PC-9 (cell line): ENCODE measurements at regions of chr7 and their contacts with region 1.

Region 1: GRCh38 chr7:11026452-11027359 is 53.0 kb downstream of the PHF14 start:
- DNase-seq: no peak
- H3K4me3 ChIP-seq: no peak overlapping the region
- H3K27ac ChIP-seq: no peak overlapping the region
- H3K4me1 ChIP-seq: no peaks in the 10 kb centered on the region
- H3K27me3 ChIP-seq: no peaks in the 10 kb centered on the region
- CTCF ChIP-seq: no peak

Region 2: DNA sequence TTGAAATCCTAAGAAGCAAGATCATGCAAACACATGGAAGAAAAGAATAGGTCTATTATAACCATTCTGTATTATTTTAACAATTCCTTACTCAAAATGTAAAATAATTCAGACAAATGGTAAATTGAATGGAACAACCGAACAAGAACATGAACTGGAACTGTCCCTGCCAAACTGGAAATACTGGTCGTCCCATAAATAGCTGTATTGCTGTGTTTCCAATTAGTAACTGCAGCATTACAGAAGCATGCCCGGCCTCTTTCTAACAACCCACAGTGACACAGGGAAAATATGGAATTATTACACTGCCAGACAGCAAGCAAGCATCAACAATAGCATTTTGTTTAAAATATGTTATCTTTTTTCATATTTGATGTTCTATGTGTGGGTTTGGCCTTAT is 1191.5 kb before region 1 on chr7:
- CTCF ChIA-PET with region 1: interaction called, 11 read pairs
- POLR2A ChIA-PET with region 1: no interaction called
- intact Hi-C with region 1: no loop called
- DNase-seq: peak in 1 of 2 experiments; percentile 46
- H3K4me3 ChIP-seq: no peak overlapping the region
- H3K27ac ChIP-seq: no peak overlapping the region
- H3K4me1 ChIP-seq: no peaks in the 10 kb centered on the region
- H3K27me3 ChIP-seq: no peaks in the 10 kb centered on the region
- CTCF ChIP-seq: no peak

Region 3: DNA sequence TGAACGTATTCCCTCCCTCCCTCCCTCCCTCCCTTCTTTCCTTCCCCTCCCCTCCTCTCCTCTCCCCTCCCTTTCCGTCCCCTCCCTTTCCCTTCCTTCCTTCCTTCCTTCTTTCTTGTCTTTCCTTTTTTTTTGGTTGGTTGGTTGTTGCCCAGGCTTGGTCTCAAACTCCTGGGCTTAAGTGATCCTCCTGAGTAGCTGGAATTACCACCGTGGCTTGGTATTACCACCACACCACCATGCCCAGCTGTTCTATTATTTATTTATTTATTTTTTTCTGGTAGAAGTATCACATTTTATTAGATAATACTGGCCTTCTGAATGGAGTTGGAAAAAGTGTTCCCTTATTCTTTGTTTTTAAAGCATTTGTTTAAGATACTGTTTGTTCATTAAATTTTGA is 42.9 kb after region 1 on chr7:
- CTCF ChIA-PET with region 1: no interaction called
- POLR2A ChIA-PET with region 1: no interaction called
- intact Hi-C with region 1: no loop called
- DNase-seq: no peak
- H3K4me3 ChIP-seq: no peak overlapping the region
- H3K27ac ChIP-seq: no peak overlapping the region
- H3K4me1 ChIP-seq: no peaks in the 10 kb centered on the region
- H3K27me3 ChIP-seq: no peaks in the 10 kb centered on the region
- CTCF ChIP-seq: no peak